ENCODE measurements at regions of chr3 and their contacts with region 1.

Region 1: GRCh38 chr3:169744366-169745054 is 20.4 kb downstream of the TERC start:
- DNase-seq: no peak
- ATAC-seq: peak; percentile 62; the same call in 1 of the 2 replicates
- H3K4me3 ChIP-seq: no peak overlapping the region
- H3K27ac ChIP-seq: no peak overlapping the region
- H3K4me1 ChIP-seq: peaks cover 0 to 9% of the 10 kb centered on the region in 2 experiments; a peak in 1 of 4 replicates
- H3K27me3 ChIP-seq: 0 out of 2 replicates have a peak, but pooled peaks cover 7% of the 10 kb centered on the region
- CTCF ChIP-seq: peak in 2 of 3 experiments; percentile 48 to 59; a peak in 3 of 6 replicates
- POLR2A ChIP-seq: no peak
- RAD21 ChIP-seq: peak; percentile 76

Region 2: GRCh38 chr3:168511428-168512014 is 1233.0 kb before region 1 on chr3:
- CTCF ChIA-PET with region 1: no interaction called
- POLR2A ChIA-PET with region 1: no interaction called
- RAD21 ChIA-PET with region 1: no interaction called
- intact Hi-C with region 1: loop called (anchors 2 kb)
- DNase-seq: no peak
- ATAC-seq: peak; percentile 60; the same call in 1 of the 2 replicates
- H3K4me3 ChIP-seq: no peak overlapping the region
- H3K27ac ChIP-seq: no peak overlapping the region
- H3K4me1 ChIP-seq: no peaks in the 10 kb centered on the region
- H3K27me3 ChIP-seq: peaks cover 4% of the 10 kb centered on the region
- CTCF ChIP-seq: peak; percentile 32 to 59 (median 57); a peak in 5 of 6 replicates
- POLR2A ChIP-seq: no peak
- RAD21 ChIP-seq: peak; percentile 53

Region 3: DNA sequence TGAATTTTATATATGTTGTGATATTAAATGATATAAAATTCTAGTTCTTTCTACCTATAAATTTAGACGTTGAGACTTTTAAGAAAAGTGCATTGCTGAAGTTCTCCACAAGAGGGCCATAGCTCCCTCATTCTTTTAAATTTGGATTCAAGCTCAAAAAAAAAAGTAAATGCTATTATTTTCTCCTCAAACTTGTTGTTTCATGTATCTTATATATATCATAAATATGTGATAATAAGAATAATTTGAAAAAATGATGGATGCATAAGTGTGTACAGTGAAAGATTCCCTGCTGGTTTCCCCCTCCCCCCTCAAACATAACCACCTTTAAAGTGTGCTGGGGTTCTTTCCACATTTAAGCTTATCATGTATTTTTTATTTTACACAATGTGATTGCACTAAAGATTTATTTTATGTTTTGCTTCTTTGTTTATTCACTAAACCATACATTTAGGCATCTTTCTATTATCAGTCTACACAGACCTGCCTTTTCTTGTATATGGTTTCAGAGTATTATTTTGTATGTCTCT is 879.4 kb before region 1 on chr3:
- CTCF ChIA-PET with region 1: interaction called, 23 read pairs
- POLR2A ChIA-PET with region 1: no interaction called
- RAD21 ChIA-PET with region 1: interaction called in 1 of 2 experiments, 3 read pairs
- intact Hi-C with region 1: loop called (anchors 1 kb)
- DNase-seq: no peak
- ATAC-seq: no peak
- H3K4me3 ChIP-seq: no peak overlapping the region
- H3K27ac ChIP-seq: no peak overlapping the region
- H3K4me1 ChIP-seq: no peaks in the 10 kb centered on the region
- H3K27me3 ChIP-seq: peaks cover 16% of the 10 kb centered on the region
- CTCF ChIP-seq: peak; percentile 52 to 65 (median 61)
- POLR2A ChIP-seq: no peak
- RAD21 ChIP-seq: peak; percentile 60

Region 4: GRCh38 chr3:169133178-169134161 is 611.0 kb before region 1 on chr3:
- CTCF ChIA-PET with region 1: interaction called, 3 read pairs
- POLR2A ChIA-PET with region 1: no interaction called
- RAD21 ChIA-PET with region 1: no interaction called
- intact Hi-C with region 1: loop called (anchors 1 kb)
- DNase-seq: no peak
- ATAC-seq: no peak
- H3K4me3 ChIP-seq: no peak overlapping the region
- H3K27ac ChIP-seq: no peak overlapping the region
- H3K4me1 ChIP-seq: no peaks in the 10 kb centered on the region
- H3K27me3 ChIP-seq: peaks cover 17% of the 10 kb centered on the region
- CTCF ChIP-seq: peak; percentile 37 to 49 (median 41); a peak in 5 of 6 replicates
- POLR2A ChIP-seq: no peak
- RAD21 ChIP-seq: peak; percentile 61